ENCODE measurements at regions of chr6 and their contacts with region 1.

Region 1: DNA sequence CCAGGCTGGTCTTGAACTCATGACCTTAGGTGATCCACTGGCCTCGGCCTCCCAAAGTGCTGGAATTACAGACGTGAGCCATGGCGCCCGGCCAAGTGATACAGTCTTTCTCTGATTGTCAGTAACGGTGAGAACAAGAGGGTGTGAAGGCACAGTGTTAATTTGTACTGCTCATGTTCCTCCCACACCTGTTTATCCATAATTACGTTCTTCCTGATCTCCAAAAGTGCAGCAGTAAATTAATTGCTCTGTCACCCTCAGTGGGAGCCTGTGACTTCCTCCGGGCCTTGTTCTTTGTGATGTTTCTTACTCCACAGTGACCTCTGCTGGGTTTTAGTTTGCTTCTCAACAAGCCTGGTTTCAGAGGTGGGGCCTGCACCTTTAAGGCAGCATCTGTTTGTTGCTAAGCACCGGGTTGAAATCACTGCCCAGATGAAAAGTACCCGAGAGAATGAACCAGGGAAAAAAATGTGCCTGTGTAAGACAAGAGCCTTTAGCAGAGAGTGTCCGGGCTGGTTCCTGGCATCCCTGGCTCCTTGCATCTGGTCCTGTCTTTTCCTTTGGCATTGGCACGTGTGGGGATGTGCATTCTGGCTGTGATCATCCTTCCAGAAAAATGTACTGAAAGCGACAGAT is 89.1 kb upstream of the CLDN20 start:
- DNase-seq: peak; percentile 66
- H3K4me3 Mint-ChIP-seq: peak overlapping the region; percentile 27
- H3K27ac Mint-ChIP-seq: peak overlapping the region; percentile 76
- H3K4me1 Mint-ChIP-seq: peaks cover 54% of the 10 kb centered on the region
- H3K27me3 Mint-ChIP-seq: no peaks in the 10 kb centered on the region

Region 2: DNA sequence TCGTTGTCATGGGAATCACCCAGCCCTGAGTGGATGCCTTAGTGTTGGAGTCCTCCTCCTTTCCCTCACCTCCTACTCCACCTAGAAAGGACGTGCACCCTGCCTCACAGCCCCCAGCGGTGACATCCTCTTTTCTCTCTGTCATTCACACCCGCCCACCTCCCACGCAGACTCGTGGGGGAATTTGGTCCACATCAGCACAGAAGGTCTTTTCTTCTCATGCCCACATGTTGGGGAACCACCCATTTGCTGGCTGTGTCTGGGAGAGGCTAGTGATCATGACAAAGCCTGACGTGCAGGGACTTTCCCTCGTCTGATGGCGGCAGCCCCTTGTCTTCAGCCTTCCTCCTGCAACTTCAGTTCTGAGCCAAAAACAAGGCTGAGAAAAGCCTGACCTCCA is 568.2 kb before region 1 on chr6:
- intact Hi-C with region 1: loop called (anchors 1 kb)
- DNase-seq: peak; percentile 66
- H3K4me3 Mint-ChIP-seq: peak overlapping the region; percentile 65
- H3K27ac Mint-ChIP-seq: peak overlapping the region; percentile 86
- H3K4me1 Mint-ChIP-seq: peaks cover 24% of the 10 kb centered on the region
- H3K27me3 Mint-ChIP-seq: peaks cover 3% of the 10 kb centered on the region

Region 3: DNA sequence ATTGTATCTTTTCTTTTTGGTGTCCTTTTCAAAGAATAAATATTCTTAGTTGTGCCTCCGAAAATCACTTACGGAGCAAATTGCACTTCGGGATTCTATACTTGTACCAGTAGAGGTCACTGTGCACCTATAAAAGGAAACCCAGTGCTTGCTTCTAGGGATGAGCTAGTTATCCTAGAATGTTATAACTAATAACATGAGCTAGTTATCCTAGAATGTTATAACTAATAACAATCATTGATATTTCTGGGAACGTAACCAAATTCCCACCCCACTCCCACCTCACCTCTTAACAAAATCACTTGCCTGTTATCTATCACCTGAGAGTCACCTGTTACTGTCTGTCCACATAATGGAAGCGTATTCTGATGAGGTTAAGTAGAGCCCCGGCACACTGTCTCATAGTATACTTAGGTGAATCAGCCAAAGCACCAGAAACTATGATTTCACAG is 306.5 kb before region 1 on chr6:
- intact Hi-C with region 1: loop called (anchors 1 kb)
- DNase-seq: no peak
- H3K4me3 Mint-ChIP-seq: no peak overlapping the region
- H3K27ac Mint-ChIP-seq: no peak overlapping the region
- H3K4me1 Mint-ChIP-seq: peaks cover 6% of the 10 kb centered on the region
- H3K27me3 Mint-ChIP-seq: no peaks in the 10 kb centered on the region

Region 4: GRCh38 chr6:155030148-155030720 is 144.5 kb before region 1 on chr6:
- intact Hi-C with region 1: no loop called
- DNase-seq: no peak
- H3K4me3 Mint-ChIP-seq: no peak overlapping the region
- H3K27ac Mint-ChIP-seq: no peak overlapping the region
- H3K4me1 Mint-ChIP-seq: peaks cover 15% of the 10 kb centered on the region
- H3K27me3 Mint-ChIP-seq: no peaks in the 10 kb centered on the region

Region 5: DNA sequence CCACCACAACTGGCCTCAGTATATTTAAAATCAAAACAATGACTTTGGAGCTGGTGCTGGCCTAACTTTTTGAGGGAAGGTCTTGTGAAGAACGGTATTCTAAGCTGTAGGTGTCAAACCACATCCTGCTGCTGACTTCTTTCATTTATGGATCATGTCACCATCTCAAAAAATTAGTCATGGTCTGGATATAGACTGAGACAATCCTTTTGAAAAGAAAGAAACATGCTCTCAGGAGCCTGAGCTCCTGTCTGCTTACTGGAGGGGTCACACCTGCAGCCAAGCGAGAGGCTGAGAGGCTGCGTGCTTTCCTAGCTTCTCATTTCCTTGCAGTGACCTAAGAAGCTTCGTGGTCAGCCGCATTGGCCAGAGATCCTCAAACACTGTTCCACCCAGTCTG is 124.4 kb before region 1 on chr6:
- intact Hi-C with region 1: loop called (anchors 1 kb)
- DNase-seq: peak; percentile 44
- H3K4me3 Mint-ChIP-seq: peak overlapping the region; percentile 76
- H3K27ac Mint-ChIP-seq: peak overlapping the region; percentile 95
- H3K4me1 Mint-ChIP-seq: peaks cover 43% of the 10 kb centered on the region
- H3K27me3 Mint-ChIP-seq: no peaks in the 10 kb centered on the region

Region 6: GRCh38 chr6:155117266-155117665 is 57.4 kb before region 1 on chr6:
- intact Hi-C with region 1: loop called (anchors 1 kb)
- DNase-seq: no peak
- H3K4me3 Mint-ChIP-seq: no peak overlapping the region
- H3K27ac Mint-ChIP-seq: peak overlapping the region; percentile 68
- H3K4me1 Mint-ChIP-seq: peaks cover 47% of the 10 kb centered on the region
- H3K27me3 Mint-ChIP-seq: peaks cover 2% of the 10 kb centered on the region

Region 7: DNA sequence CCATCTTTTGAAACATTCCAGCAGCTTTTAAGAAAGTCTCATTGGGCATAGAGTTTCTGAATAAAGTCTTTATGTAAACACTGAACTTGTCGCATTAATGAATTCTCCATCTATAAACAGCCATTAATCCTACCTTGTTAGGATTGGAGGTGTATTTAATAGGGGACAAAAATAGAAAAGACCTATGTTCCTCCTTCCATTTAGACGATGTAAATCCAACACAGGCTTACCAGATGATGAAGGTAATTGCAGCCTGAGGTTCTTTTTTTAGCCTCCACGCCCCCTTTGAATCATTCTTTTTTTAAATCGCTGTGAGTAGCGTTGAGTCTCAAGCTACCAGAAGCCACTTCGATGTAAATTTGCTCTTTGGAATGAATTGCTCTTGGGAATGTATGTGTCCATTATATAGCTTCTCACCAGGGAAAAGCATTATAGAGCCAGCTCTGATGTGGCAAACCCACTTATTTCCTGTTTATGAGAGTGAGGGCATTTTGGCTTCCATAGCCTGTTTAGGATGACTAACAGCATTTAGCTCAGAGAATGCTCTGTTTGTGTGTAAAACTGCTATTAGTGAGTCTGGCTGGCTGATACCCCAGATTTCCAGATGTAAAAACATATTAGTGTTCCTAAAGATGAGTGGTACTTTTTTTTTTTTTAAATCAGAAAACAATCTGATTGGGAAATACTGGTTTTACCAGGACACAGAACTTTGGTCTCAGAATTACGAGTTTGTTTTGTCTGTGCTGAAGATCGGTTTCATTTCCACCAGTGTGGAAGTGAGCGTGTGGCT is 14.2 kb after region 1 on chr6:
- intact Hi-C with region 1: loop called (anchors 1 kb)
- DNase-seq: no peak
- H3K4me3 Mint-ChIP-seq: peak overlapping the region; percentile 52
- H3K27ac Mint-ChIP-seq: peak overlapping the region; percentile 86
- H3K4me1 Mint-ChIP-seq: peaks cover 51% of the 10 kb centered on the region
- H3K27me3 Mint-ChIP-seq: no peaks in the 10 kb centered on the region

Region 8: DNA sequence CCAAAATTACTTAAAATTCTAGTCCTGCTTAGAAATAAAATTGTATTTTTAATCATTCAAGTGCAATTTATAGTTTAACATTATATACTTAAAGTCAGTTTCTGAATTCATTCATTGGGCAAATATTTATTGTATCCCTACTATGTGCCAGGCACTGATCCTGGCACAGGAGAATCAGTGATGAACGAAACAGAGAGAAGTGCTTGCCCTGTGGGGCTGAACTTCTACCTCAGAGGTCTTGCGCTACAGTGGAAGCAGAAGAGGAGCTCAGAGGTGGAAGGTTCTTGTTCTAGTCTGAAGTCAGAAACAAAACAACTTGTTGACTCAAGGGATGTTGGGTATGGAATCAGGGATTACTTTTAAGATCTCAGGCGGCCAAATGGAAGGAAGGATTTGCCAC is 95.1 kb after region 1 on chr6:
- intact Hi-C with region 1: loop called (anchors 2 kb)
- DNase-seq: no peak
- H3K4me3 Mint-ChIP-seq: no peak overlapping the region
- H3K27ac Mint-ChIP-seq: no peak overlapping the region
- H3K4me1 Mint-ChIP-seq: peaks cover 13% of the 10 kb centered on the region
- H3K27me3 Mint-ChIP-seq: no peaks in the 10 kb centered on the region

Region 9: DNA sequence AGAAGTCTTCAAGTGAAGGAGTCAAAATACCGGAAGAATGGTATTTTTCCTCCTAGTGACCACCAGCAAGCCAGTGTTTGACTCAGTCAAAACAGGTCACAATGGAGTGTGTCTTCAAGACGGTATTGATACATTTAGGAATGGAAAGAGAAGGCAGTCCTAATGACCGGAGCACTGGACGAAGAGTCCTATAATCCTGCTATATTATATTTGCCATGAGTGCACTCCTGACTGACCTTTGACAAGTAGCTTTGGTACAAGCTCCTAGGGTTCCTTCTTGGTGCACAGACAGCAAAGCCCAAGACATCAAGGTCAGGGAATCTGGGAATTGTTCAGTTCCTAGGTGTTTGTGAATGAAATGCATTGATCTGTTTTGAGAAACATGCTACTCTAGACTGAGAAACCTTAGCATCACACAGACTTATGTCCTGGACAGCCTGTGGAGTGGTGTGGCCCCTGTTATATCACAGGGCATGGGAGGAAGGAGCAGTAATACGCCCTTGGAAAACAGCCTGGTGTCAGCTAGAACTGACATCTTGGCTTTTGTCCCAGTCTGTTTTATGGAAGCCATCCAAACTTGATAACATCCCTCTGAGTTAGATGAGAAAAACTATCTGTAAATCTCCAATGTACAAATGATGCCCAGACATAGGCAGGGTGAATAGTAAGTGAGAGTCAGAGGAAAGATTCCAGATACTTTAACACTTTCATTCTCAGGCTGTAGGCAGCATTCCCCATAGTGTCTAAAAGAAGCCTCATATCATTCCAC is 262.5 kb after region 1 on chr6:
- intact Hi-C with region 1: no loop called
- DNase-seq: no peak
- H3K4me3 Mint-ChIP-seq: no peak overlapping the region
- H3K27ac Mint-ChIP-seq: no peak overlapping the region
- H3K4me1 Mint-ChIP-seq: peaks cover 5% of the 10 kb centered on the region
- H3K27me3 Mint-ChIP-seq: no peaks in the 10 kb centered on the region

Region 10: DNA sequence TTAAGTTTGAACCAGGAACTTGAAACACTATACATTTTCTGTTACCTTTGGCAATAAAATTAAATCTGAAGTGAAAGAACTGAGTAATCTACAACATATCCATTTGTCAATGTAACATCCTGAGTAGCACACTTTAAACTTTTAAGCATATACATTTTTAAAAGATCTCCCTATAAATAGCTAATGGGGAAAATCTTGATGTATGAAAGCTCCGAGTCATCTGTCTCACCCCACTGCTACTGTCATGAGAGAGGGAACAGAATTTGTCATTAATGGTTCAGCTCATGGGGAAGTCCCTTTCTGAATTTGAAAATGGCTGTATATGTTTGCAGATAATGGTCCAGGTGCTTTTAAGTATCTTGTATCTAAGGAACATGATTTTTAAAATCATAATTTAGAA is 336.2 kb after region 1 on chr6:
- intact Hi-C with region 1: no loop called
- DNase-seq: no peak
- H3K4me3 Mint-ChIP-seq: no peak overlapping the region
- H3K27ac Mint-ChIP-seq: no peak overlapping the region
- H3K4me1 Mint-ChIP-seq: no peaks in the 10 kb centered on the region
- H3K27me3 Mint-ChIP-seq: peaks cover 3% of the 10 kb centered on the region

Measured in activated T-helper 1 cell treated with anti-CD3 and anti-CD28 coated beads, Interleukin-12 subunit alpha, Interleukin-12 subunit beta, Interleukin-2, Interleukin-4 antibody, amounts not matched to agents 30 ng/mL and 10 ng/mL and 1 ng/mL, durations not matched to agents 14 hours and 24 hours and 36 hours (primary cell).